OCI-LY7 (cell line): ENCODE measurements at regions of chr6 and their contacts with region 1.

Region 1: GRCh38 chr6:71012866-71013469 is 56.1 kb upstream of the B3GAT2 start:
- DNase-seq: peak; percentile 68
- H3K4me3 ChIP-seq: no peak overlapping the region
- H3K27ac ChIP-seq: no peak overlapping the region
- H3K4me1 ChIP-seq: peaks cover 4% of the 10 kb centered on the region
- CTCF ChIP-seq: peak; percentile 94

Region 2: GRCh38 chr6:70221025-70221714 is 791.8 kb before region 1 on chr6:
- CTCF ChIA-PET with region 1: no interaction called
- POLR2A ChIA-PET with region 1: no interaction called
- intact Hi-C with region 1: loop called (anchors 10 kb)
- DNase-seq: peak; percentile 44
- H3K4me3 ChIP-seq: no peak overlapping the region
- H3K27ac ChIP-seq: no peak overlapping the region
- H3K4me1 ChIP-seq: no peaks in the 10 kb centered on the region
- CTCF ChIP-seq: peak; percentile 78

Region 3: DNA sequence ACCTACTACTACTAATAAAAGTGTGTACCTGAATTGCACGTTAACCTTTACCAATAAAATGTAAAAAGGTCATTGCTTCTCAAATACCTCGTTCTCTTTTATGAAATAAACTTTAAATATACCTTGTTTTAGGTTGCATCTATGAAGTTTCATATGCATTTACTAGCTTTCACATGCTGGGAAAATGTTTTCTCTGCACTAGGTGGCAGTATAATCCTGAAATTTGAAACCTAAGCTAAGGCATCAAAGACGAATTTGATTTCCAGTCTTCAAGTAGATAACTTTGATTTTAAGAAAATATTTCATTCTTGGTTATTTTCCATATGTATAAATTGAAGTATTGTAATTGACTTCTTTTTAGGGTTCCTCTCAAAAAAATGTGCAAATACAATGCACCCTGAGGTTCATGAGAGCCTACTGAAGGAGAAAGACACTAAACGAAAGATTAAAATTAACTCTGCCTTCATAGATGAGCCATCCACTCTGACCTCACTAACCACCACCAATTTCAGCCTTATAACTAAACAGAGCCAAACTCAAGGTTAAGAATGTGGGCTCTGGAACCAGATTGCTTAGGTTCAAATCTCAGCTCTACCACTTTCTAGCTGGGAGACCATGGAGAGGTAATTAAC is 702.8 kb before region 1 on chr6:
- CTCF ChIA-PET with region 1: no interaction called
- POLR2A ChIA-PET with region 1: no interaction called
- intact Hi-C with region 1: loop called (anchors 2 kb)
- DNase-seq: peak; percentile 38
- H3K4me3 ChIP-seq: no peak overlapping the region
- H3K27ac ChIP-seq: no peak overlapping the region
- H3K4me1 ChIP-seq: no peaks in the 10 kb centered on the region
- CTCF ChIP-seq: peak; percentile 88

Region 4: DNA sequence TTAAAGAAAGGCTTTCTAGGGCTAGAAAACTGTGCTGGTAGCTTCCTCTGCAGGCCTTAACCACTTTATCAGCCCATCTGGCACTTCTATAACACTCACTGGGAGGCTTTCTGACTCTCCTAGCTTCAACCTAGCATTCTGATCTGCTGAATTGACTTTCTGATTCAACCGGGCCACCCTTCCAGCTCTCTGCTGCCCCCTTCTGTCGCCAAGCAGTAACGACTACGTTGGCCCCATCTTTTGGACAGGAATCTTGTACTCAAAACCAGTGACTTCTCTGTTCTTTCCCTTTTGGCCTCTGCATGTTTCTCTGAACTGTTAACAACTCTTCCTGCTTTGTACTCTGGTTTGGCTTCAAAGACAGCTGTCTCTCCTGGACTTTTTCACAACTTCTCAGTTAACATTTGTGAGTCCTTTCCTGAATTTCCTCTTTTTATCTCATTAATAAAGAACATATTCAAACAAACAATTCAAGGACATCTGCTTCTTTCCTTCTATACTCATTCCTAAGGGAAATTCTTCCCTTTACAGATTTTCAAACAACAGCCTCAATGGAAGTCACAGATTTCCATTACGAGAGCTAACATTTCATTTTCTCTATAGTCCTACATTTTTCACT is 643.5 kb before region 1 on chr6:
- CTCF ChIA-PET with region 1: no interaction called
- POLR2A ChIA-PET with region 1: no interaction called
- intact Hi-C with region 1: loop called (anchors 5 kb)
- DNase-seq: peak; percentile 58
- H3K4me3 ChIP-seq: no peak overlapping the region
- H3K27ac ChIP-seq: no peak overlapping the region
- H3K4me1 ChIP-seq: no peaks in the 10 kb centered on the region
- CTCF ChIP-seq: peak; percentile 82

Region 5: GRCh38 chr6:70706491-70707123 is 306.4 kb before region 1 on chr6:
- CTCF ChIA-PET with region 1: no interaction called
- POLR2A ChIA-PET with region 1: no interaction called
- intact Hi-C with region 1: loop called (anchors 5 kb)
- DNase-seq: peak; percentile 62
- H3K4me3 ChIP-seq: no peak overlapping the region
- H3K27ac ChIP-seq: no peak overlapping the region
- H3K4me1 ChIP-seq: no peaks in the 10 kb centered on the region
- CTCF ChIP-seq: peak; percentile 96

Region 6: DNA sequence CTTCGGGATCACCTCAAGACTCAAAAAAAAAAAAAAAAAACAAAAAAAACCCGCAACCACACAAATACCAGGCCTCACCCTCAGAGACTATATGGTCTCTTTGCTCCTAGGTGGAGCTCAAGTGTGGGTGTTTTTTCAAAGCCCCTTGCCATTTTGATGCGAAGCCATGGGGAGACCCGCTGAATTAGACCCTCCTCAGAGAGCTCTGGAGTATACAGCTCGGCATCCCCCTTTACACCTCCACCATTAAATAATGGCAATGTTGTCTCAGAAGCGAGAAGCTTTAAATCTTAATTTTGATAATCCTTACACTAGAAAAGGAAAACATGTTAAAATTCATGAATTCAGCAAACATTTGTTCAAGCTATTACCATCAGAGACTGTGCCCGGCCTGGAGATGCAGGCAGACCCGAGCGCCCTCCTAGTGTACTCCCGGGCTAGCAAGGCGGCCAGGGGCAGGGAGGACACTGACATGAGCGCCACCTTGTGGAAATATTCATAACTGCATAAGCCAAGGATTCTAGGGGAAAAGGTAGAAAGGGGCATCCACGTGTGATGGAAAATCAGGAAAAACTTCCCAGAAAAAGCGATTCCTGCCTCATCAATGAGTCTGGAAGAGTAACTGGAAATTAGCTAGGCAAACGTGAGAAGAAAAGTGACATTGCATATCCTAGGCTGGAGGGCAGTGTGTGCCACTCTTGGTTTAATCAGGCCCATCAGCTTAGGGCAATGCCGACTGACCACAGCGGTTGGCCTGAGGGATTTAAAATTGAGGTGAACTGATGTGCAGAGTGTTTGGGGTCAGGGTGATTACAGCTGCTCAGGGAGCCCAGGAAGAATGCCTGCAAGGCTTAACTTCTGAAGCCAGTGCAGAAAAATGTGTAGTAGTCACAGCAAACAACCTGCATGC is 128.6 kb before region 1 on chr6:
- CTCF ChIA-PET with region 1: no interaction called
- POLR2A ChIA-PET with region 1: no interaction called
- intact Hi-C with region 1: loop called (anchors 5 kb)
- DNase-seq: peak; percentile 61
- H3K4me3 ChIP-seq: no peak overlapping the region
- H3K27ac ChIP-seq: no peak overlapping the region
- H3K4me1 ChIP-seq: no peaks in the 10 kb centered on the region
- CTCF ChIP-seq: peak; percentile 94

Region 7: DNA sequence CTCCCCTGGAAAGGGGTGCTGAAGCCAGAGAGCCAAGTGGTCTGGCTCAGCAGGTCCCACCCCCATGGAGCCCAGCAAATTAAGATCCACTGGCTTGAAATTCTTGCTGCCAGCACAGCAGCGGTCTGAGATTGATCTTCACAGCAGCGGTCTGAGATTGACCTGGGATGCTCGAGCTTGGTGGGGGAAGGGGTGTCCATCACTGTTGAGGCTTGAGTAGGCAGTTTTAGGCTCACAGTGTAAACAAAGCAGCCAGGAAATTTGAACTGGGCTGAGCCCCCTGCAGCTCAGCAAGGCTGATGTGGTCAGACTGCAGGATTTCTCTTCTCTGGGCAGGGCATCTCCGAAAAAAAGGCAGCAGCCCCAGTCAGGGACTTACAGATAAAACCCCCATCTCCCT is 14.8 kb before region 1 on chr6:
- CTCF ChIA-PET with region 1: no interaction called
- POLR2A ChIA-PET with region 1: no interaction called
- intact Hi-C with region 1: no loop called
- DNase-seq: no peak
- H3K4me3 ChIP-seq: no peak overlapping the region
- H3K27ac ChIP-seq: no peak overlapping the region
- H3K4me1 ChIP-seq: no peaks in the 10 kb centered on the region
- CTCF ChIP-seq: no peak

Region 8: GRCh38 chr6:71228461-71229041 is 215.6 kb after region 1 on chr6:
- CTCF ChIA-PET with region 1: no interaction called
- POLR2A ChIA-PET with region 1: no interaction called
- intact Hi-C with region 1: no loop called
- DNase-seq: no peak
- H3K4me3 ChIP-seq: no peak overlapping the region
- H3K27ac ChIP-seq: no peak overlapping the region
- H3K4me1 ChIP-seq: no peaks in the 10 kb centered on the region
- CTCF ChIP-seq: no peak

Region 9: DNA sequence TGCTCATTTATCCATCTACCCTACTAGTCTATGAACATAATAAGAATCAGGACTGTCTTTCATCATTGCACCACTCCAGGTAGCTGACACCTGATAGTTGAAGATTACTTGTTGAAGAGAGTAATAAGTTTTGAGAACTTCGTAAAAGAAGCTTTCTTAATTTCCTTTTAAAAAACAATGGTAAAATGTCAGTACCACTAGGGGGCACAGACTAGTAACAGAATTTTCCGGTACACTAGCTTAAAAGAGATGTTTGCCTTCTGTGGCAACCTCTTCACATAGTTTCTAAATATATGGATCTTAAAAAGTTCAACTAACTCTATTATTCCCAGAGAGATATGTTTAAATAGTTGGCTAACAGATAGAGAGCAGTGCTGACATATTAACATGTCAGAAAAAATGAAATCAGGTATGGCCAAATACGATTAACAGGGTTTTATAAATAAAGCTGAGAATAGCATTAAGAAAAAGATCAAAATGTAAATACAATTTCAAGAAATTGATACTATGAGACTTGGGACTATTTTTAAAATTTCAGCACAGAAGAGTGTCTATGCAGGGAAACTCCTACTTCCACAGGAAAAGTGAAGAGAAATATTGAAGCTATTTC is 1603.5 kb after region 1 on chr6:
- CTCF ChIA-PET with region 1: no interaction called
- POLR2A ChIA-PET with region 1: interaction called, 11 read pairs
- intact Hi-C with region 1: no loop called
- DNase-seq: peak; percentile 66
- H3K4me3 ChIP-seq: no peak overlapping the region
- H3K27ac ChIP-seq: no peak overlapping the region
- H3K4me1 ChIP-seq: peaks cover 25% of the 10 kb centered on the region
- CTCF ChIP-seq: peak; percentile 95